CD8-positive, alpha-beta T cell (primary cell): ENCODE measurements at regions of chrX and their contacts with region 1.

Region 1: GRCh38 chrX:47384502-47384901 is 14.1 kb downstream of the ZNF157 start:
- DNase-seq: peak; percentile 41 to 84 (median 69)
- ATAC-seq: peak; percentile 49
- H3K4me3 ChIP-seq: no peak overlapping the region
- H3K4me3 Mint-ChIP-seq: peak overlapping the region; percentile 35
- H3K27ac ChIP-seq: no peak overlapping the region
- H3K27ac Mint-ChIP-seq: peak overlapping the region; percentile 81
- H3K4me1 ChIP-seq: peaks cover 22% of the 10 kb centered on the region
- H3K4me1 Mint-ChIP-seq: peaks cover 23% of the 10 kb centered on the region
- H3K27me3 ChIP-seq: no peaks in the 10 kb centered on the region
- H3K27me3 Mint-ChIP-seq: no peaks in the 10 kb centered on the region
- CTCF ChIP-seq: peak; percentile 63

Region 2: DNA sequence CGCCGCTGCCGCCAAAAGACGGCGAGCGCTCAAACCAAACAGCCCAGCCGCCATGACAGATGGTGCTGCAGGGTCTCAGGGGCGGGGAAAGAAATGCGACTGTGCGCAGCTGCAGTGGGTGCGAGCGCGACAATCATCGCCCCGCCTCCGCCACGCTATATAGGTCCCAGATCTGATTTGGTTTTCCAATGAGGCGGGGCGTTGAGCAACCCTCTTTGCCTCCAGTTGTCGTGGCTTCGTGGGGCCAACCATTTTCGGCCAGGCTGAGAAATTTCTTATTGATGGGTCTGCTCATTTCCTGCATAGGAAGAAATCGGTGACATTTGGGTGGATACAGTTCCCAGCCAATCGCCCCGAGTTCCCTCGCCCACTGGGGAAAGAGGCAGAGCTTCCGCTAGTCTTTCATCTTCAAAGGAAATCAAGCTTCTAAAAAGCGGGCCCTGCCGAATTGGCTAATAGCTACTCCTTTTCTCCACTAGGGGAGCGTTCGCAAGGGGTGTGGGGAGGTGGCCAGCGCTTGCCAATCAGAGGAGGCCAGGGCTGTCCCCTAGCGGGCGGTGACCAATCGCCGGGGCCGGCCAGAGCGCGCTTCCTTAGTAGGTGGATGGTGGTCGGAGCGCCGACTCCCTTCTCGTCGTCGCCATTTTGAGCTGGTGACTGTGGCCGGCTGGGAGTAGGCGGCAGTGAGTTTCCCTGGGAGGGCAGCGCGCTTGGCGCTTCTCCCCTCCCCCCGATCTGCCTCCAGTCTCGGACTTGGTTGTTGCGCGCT is 239.7 kb before region 1 on chrX and contains the starts of genes NDUFB11 and RBM10:
- CTCF ChIA-PET with region 1: no interaction called
- POLR2A ChIA-PET with region 1: interaction called, 3 read pairs
- intact Hi-C with region 1: loop called in 1 of 2 experiments (anchors 5 kb)
- DNase-seq: peak; percentile 75 to 95 (median 88)
- ATAC-seq: peak; percentile 84
- H3K4me3 ChIP-seq: peak within 1 kb of the TSS; percentile 84 to 87
- H3K4me3 Mint-ChIP-seq: peak within 1 kb of the TSS; percentile 91
- H3K27ac ChIP-seq: peak within 1 kb of the TSS; percentile 82 to 94
- H3K27ac Mint-ChIP-seq: peak within 1 kb of the TSS; percentile 95
- H3K4me1 ChIP-seq: peaks cover 23% of the 10 kb centered on the region
- H3K4me1 Mint-ChIP-seq: peaks cover 45% of the 10 kb centered on the region
- H3K27me3 ChIP-seq: no peaks in the 10 kb centered on the region
- H3K27me3 Mint-ChIP-seq: no peaks in the 10 kb centered on the region
- CTCF ChIP-seq: peak; percentile 52
- total RNA-seq, gene NDUFB11: 50.5 to 51.4 TPM
- total RNA-seq, gene RBM10: 31.9 to 32.0 TPM

Region 3: GRCh38 chrX:47233337-47234113 is 151.0 kb before region 1 on chrX:
- CTCF ChIA-PET with region 1: interaction called, 6 read pairs
- POLR2A ChIA-PET with region 1: interaction called, 10 read pairs
- intact Hi-C with region 1: loop called (anchors 1 to 2 kb)
- DNase-seq: peak; percentile 81 to 98 (median 95)
- ATAC-seq: peak; percentile 89
- H3K4me3 ChIP-seq: peak overlapping the region; percentile 77 to 96
- H3K4me3 Mint-ChIP-seq: peak overlapping the region; percentile 96
- H3K27ac ChIP-seq: peak overlapping the region; percentile 100
- H3K27ac Mint-ChIP-seq: peak overlapping the region; percentile 99
- H3K4me1 ChIP-seq: peaks cover 34% of the 10 kb centered on the region
- H3K4me1 Mint-ChIP-seq: peaks cover 40% of the 10 kb centered on the region
- H3K27me3 ChIP-seq: no peaks in the 10 kb centered on the region
- H3K27me3 Mint-ChIP-seq: no peaks in the 10 kb centered on the region
- CTCF ChIP-seq: no peak

Region 4: GRCh38 chrX:47446431-47446830 is 61.9 kb after region 1 on chrX:
- CTCF ChIA-PET with region 1: no interaction called
- POLR2A ChIA-PET with region 1: no interaction called
- intact Hi-C with region 1: no loop called
- DNase-seq: no peak
- ATAC-seq: no peak
- H3K4me3 ChIP-seq: no peak overlapping the region
- H3K4me3 Mint-ChIP-seq: no peak overlapping the region
- H3K27ac ChIP-seq: no peak overlapping the region
- H3K27ac Mint-ChIP-seq: no peak overlapping the region
- H3K4me1 ChIP-seq: no peaks in the 10 kb centered on the region
- H3K4me1 Mint-ChIP-seq: no peaks in the 10 kb centered on the region
- H3K27me3 ChIP-seq: no peaks in the 10 kb centered on the region
- H3K27me3 Mint-ChIP-seq: no peaks in the 10 kb centered on the region
- CTCF ChIP-seq: no peak

Region 5: GRCh38 chrX:47482512-47483309 is 98.2 kb after region 1 on chrX and contains the start of gene ZNF41:
- CTCF ChIA-PET with region 1: no interaction called
- POLR2A ChIA-PET with region 1: no interaction called
- intact Hi-C with region 1: loop called in 1 of 2 experiments (anchors 10 kb)
- DNase-seq: peak; percentile 60 to 92 (median 79)
- ATAC-seq: peak; percentile 83
- H3K4me3 ChIP-seq: peak within 1 kb of the TSS; percentile 81 to 86
- H3K4me3 Mint-ChIP-seq: peak within 1 kb of the TSS; percentile 94
- H3K27ac ChIP-seq: peak within 1 kb of the TSS; percentile 81 to 88
- H3K27ac Mint-ChIP-seq: peak within 1 kb of the TSS; percentile 99
- H3K4me1 ChIP-seq: peaks cover 18% of the 10 kb centered on the region
- H3K4me1 Mint-ChIP-seq: peaks cover 42% of the 10 kb centered on the region
- H3K27me3 ChIP-seq: no peaks in the 10 kb centered on the region
- H3K27me3 Mint-ChIP-seq: no peaks in the 10 kb centered on the region
- CTCF ChIP-seq: no peak
- total RNA-seq, gene ZNF41: 2.9 to 4.9 TPM

Region 6: DNA sequence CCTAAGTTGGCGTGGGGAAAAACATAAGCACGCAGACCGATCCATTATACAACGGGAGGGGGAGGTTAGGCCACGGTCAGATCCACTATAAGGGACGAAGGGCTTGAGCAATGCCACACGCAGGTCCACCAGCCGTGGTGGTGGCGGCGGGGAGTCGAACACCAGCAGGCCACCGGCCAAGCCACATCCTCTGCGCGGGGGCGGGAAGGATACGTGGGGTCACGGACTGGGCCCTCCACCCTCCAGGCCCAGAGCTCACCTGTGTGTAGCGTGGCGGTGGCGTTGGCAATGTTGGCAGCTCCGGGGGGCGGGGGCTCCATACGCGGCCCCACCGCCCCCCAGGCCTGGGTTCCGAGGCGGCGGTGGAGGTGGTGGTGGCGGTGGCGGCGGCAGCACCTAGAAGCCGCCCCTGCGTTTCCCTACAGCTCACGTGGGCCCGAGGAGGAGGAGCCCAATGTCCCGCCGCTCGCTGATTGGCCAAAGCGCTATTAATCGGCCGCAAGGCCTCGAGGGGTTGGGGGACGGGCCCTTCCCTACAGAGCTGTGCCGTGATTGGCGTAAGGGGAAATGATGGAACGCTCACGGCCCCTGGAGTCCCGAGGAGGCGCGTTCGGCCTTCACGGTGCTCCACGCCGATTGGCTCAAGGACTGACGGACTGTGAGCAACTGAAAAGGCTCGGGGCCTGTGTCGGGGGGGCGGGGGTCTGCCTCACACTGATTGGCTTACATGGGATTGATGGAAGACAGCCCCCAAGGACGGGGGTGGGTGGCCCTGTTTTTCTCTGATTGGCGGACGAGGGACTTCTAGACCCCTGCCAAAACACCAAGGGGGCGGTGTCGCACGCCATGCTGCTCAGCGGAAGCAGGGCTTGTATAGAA is 265.9 kb after region 1 on chrX and contains the start of gene ELK1:
- CTCF ChIA-PET with region 1: no interaction called
- POLR2A ChIA-PET with region 1: no interaction called
- intact Hi-C with region 1: loop called in 1 of 2 experiments (anchors 10 kb)
- DNase-seq: peak; percentile 75 to 96 (median 87)
- ATAC-seq: peak; percentile 89
- H3K4me3 ChIP-seq: peak within 1 kb of the TSS; percentile 63 to 69
- H3K4me3 Mint-ChIP-seq: peak within 1 kb of the TSS; percentile 91
- H3K27ac ChIP-seq: peak within 1 kb of the TSS; percentile 61 to 70
- H3K27ac Mint-ChIP-seq: peak within 1 kb of the TSS; percentile 93
- H3K4me1 ChIP-seq: peaks cover 25% of the 10 kb centered on the region
- H3K4me1 Mint-ChIP-seq: peaks cover 44% of the 10 kb centered on the region
- H3K27me3 ChIP-seq: no peaks in the 10 kb centered on the region
- H3K27me3 Mint-ChIP-seq: no peaks in the 10 kb centered on the region
- CTCF ChIP-seq: no peak
- total RNA-seq, gene ELK1: 33.6 to 41.2 TPM